ENCODE measurements at regions of chr20 and their contacts with region 1.

Region 1: DNA sequence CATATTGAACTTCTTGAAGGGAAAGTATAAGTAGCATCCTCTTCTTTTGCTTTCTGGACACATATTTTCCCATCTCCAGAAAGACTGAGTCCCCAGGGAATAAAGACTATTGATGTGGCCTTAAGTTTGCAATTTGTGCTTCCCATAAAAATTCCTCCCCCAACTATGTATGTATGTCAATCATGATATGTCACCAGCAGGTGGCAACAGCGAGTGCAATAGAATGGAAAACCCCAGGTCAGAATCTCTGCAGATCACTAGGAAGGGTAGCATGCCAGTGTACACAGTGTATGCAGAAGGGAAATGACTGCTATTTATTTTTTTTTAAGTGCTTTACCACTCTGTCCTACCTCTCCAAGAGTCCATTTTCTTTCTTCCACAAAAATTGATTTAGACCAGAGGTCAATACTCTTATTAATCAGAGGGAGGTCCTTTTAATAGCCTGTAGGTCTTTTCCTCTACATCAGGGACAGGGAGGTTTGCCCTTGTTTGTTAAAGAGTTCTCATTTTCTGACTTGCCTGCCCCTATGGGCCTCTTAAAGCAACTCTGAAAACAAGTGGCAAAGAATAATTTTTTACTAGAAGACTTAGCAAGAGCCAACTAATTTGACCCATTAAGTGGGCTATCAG is 61.4 kb downstream of the BMP2 start:
- DNase-seq: peak; percentile 71
- H3K4me3 ChIP-seq: no peak overlapping the region
- H3K27ac ChIP-seq: no peak overlapping the region
- H3K4me1 ChIP-seq: no peaks in the 10 kb centered on the region
- H3K27me3 ChIP-seq: no peaks in the 10 kb centered on the region
- CTCF ChIP-seq: peak; percentile 59 to 70 (median 64)
- EP300 ChIP-seq: no peak
- POLR2A ChIP-seq: no peak

Region 2: DNA sequence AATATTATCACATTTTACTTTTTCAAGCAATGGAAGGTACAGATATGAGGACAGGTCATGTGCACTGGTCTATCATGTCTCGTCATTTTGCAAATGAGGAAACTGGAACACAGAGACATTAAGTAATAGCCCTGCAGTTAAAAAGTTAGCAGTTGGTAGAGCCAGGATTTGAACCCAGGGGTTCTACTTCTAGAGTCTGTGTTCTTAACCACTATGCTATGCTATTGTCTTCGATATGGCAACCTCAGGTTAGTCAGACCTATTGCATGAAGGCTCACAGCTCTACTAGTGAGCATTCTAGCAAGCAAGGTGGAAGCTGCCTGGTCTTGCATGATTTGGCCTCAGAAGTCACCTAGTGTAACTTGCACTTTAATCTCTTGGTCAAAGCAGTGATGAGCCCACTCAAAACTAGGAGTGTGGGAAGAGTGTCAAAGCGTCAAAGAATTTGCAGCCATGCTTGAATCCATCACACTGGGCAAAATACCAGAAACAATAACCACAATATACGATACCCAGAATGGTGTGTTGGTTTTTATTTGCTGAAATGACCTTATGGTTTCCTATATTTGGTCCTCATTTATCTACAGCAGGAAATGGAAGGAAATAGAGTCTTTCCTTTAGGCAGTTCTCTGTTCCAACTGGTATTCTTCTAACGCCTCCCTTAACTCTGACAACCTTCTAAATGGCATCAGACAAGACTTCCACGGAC is 81.9 kb before region 1 on chr20:
- in situ Hi-C with region 1: loop called in 1 of 4 experiments (anchors 25 kb)
- intact Hi-C with region 1: no loop called
- DNase-seq: no peak
- H3K4me3 ChIP-seq: no peak overlapping the region
- H3K27ac ChIP-seq: no peak overlapping the region
- H3K4me1 ChIP-seq: no peaks in the 10 kb centered on the region
- H3K27me3 ChIP-seq: no peaks in the 10 kb centered on the region
- CTCF ChIP-seq: no peak
- EP300 ChIP-seq: no peak
- POLR2A ChIP-seq: no peak

Region 3: DNA sequence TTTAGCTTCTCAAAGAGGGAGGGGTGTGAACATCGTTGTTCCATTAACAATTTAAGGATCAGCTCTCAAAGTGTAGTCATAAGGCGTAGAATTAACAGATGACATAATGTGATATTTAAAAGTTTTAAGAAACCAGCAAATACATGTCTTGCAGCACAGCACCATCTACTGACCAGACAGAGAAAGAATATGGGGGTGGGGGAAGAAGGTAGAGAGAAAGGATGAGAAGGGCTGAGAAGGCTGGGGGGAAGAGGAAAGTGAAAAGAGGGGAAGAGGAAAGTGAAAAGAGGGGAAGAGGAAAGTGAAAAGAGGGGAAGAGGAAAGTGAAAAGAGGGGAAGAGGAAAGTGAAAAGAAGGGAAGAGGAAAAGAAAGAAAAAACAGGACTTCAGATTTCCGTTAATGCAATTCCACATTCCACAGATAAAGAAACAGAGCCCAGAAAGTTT is 1030.5 kb after region 1 on chr20:
- in situ Hi-C with region 1: loop called in 1 of 4 experiments (anchors 25 kb)
- intact Hi-C with region 1: no loop called
- DNase-seq: no peak
- H3K4me3 ChIP-seq: no peak overlapping the region
- H3K27ac ChIP-seq: no peak overlapping the region
- H3K4me1 ChIP-seq: no peaks in the 10 kb centered on the region
- H3K27me3 ChIP-seq: no peaks in the 10 kb centered on the region
- CTCF ChIP-seq: peak; percentile 32 to 41 (median 38)
- EP300 ChIP-seq: no peak
- POLR2A ChIP-seq: no peak